AG04449 (cell line): ENCODE measurements at regions of chr5 and their contacts with region 1.

Region 1: GRCh38 chr5:35926389-35927051 is 11.9 kb downstream of the CAPSL start:
- DNase-seq: no peak
- H3K4me3 ChIP-seq: peak overlapping the region; percentile 28
- CTCF ChIP-seq: peak; percentile 74

Region 2: GRCh38 chr5:35089334-35090314 is 836.9 kb before region 1 on chr5:
- CTCF ChIA-PET with region 1: interaction called, 58 read pairs
- POLR2A ChIA-PET with region 1: no interaction called
- DNase-seq: no peak
- H3K4me3 ChIP-seq: no peak overlapping the region
- CTCF ChIP-seq: peak; percentile 78

Region 3: GRCh38 chr5:35409361-35409760 is 517.2 kb before region 1 on chr5:
- CTCF ChIA-PET with region 1: no interaction called
- POLR2A ChIA-PET with region 1: no interaction called
- DNase-seq: no peak
- H3K4me3 ChIP-seq: no peak overlapping the region
- CTCF ChIP-seq: no peak

Region 4: GRCh38 chr5:35626108-35626507 is 300.4 kb before region 1 on chr5:
- CTCF ChIA-PET with region 1: interaction called, 14 read pairs
- POLR2A ChIA-PET with region 1: no interaction called
- DNase-seq: peak; percentile 17
- H3K4me3 ChIP-seq: no peak overlapping the region
- CTCF ChIP-seq: no peak

Region 5: DNA sequence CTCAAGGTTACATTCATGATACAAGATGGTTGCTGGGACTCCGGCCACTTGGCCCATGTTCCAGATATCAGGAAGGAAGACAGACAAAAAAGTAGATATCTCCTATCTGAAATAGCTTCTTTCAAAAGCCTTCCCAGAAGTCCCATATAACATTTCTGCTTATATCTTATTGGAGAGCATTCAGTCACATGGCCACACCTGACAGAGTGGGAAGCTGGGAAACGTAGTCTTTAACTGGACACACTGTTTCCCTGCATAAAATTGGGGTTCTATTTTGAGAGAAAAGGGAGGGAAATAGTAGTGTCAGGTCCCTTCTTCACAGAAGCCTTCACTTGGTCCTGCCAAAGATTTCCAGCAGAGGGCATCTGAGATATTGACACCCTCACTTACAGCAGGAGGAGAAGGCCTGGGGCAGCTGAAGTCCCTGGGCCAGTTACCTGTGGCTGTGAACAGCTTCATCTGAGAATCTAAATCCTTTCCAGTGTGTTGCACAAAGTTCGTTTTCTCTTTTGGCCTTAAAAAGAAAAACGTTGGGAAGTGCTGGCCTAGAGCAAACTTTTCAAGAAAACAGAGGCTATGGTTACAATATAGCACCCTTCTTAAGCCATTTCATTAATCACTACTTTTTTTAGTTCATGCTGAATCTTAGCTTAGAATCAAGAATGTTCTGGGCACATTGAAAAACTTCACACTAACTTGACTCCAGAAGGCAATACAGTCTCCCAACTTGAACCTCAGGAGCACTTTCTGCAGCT is 275.3 kb before region 1 on chr5:
- CTCF ChIA-PET with region 1: interaction called, 386 read pairs
- POLR2A ChIA-PET with region 1: no interaction called
- DNase-seq: no peak
- H3K4me3 ChIP-seq: no peak overlapping the region
- CTCF ChIP-seq: peak; percentile 75

Region 6: GRCh38 chr5:35777358-35778087 is 149.0 kb before region 1 on chr5:
- CTCF ChIA-PET with region 1: interaction called, 208 read pairs
- POLR2A ChIA-PET with region 1: no interaction called
- DNase-seq: peak; percentile 41
- H3K4me3 ChIP-seq: no peak overlapping the region
- CTCF ChIP-seq: peak; percentile 51

Region 7: DNA sequence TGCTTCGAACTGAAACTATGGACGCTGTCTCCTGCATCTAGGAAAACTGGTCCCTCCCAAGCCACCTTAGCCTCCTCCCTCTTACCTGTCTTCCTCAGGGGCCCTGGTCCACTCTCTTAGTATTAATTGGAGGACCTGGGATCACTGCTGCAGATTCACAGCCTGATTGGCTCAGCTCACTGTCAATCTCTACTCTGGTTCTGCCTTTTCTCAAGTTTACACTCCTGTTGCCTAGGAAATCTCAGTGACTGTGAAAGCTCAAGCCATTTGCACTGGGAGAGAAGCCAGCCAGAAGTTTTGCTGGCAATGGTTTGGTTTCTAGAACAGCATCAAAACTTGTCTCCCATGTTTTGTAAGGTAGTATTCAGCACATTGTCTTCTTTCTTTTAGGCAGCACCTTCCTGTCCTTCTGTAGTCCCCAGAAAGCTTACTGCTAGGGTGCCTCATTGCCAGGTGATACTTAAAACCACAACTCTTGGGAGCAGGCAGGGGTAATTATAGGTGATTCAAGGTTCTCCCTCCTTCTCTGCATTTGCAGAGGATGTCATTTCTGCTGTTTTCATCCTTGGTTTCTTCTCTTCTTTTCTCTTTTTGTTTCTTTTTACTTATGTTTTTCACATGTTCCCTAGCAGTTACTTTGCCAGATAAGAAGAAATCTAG is 12.2 kb after region 1 on chr5 and contains the start of gene CAPSL:
- CTCF ChIA-PET with region 1: interaction called, 36 read pairs
- POLR2A ChIA-PET with region 1: no interaction called
- DNase-seq: no peak
- H3K4me3 ChIP-seq: no peak within 1 kb of the TSS
- CTCF ChIP-seq: no peak